Activated CD8-positive, alpha-beta T cell treated with anti-CD3 and anti-CD28 coated beads for 36 hours (primary cell): ENCODE measurements at regions of chr2 and their contacts with region 1.

Region 1: DNA sequence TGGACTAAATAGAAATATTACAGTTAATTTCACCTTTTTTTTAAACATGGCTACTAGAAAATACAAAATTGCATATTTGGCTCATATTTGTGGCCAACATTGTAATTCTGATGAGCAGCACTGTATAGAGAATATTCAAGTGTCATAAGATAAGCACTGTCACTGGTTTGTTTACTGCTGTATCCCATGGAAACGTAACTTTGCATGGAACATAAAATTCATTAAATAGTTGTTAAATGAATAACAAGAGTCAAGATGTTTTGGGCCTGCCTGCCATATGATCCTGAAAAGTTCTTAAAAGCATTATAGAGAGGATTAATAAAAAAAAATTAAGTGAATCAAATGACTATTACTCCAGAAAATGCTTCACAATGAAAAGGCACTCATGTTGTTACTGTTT is 763.7 kb upstream of the CRIM1 start:
- DNase-seq: no peak
- ATAC-seq: no peak
- H3K4me3 Mint-ChIP-seq: no peak overlapping the region
- H3K27ac Mint-ChIP-seq: no peak overlapping the region
- H3K4me1 Mint-ChIP-seq: no peaks in the 10 kb centered on the region
- H3K27me3 Mint-ChIP-seq: no peaks in the 10 kb centered on the region
- CTCF ChIP-seq: no peak

Region 2: DNA sequence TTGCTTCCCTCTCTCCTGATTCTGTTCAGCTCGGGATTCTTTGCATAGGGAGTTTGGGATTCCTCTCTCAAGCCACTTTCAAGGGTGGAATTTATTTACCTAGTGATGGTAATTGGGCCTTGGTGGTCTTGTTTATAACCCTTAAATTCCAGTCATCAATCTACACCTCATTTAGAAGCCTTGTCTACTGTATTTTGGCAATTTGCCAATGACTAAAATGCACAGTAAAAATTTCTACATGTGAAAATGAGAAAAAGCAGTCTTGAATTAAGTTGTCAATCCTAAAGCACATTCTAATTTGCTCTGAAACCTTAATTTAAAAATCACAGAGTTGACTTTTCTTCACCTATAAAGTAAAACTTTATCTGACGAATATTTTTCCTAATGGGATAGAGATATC is 14.5 kb after region 1 on chr2:
- CTCF ChIA-PET with region 1: no interaction called
- POLR2A ChIA-PET with region 1: no interaction called
- intact Hi-C with region 1: loop called (anchors 1 kb)
- DNase-seq: no peak
- ATAC-seq: no peak
- H3K4me3 Mint-ChIP-seq: no peak overlapping the region
- H3K27ac Mint-ChIP-seq: no peak overlapping the region
- H3K4me1 Mint-ChIP-seq: no peaks in the 10 kb centered on the region
- H3K27me3 Mint-ChIP-seq: no peaks in the 10 kb centered on the region
- CTCF ChIP-seq: no peak